B cell (primary cell): ENCODE measurements at regions of chr17 and their contacts with region 1.

Region 1: GRCh38 chr17:1724506-1725362 is at the start of gene WDR81:
- DNase-seq: peak; percentile 92
- ATAC-seq: peak; percentile 64
- H3K4me3 ChIP-seq: peak within 1 kb of the TSS in 4 of 5 experiments; percentile 61 to 82 (median 72)
- H3K4me3 Mint-ChIP-seq: peak within 1 kb of the TSS; percentile 83
- H3K27ac ChIP-seq: peak within 1 kb of the TSS; percentile 83 to 87
- H3K27ac Mint-ChIP-seq: peak within 1 kb of the TSS; percentile 92
- H3K4me1 ChIP-seq: peaks cover 27 to 58% of the 10 kb centered on the region in 2 donors
- H3K4me1 Mint-ChIP-seq: peaks cover 51% of the 10 kb centered on the region
- H3K27me3 ChIP-seq: no peaks in the 10 kb centered on the region
- H3K27me3 Mint-ChIP-seq: no peaks in the 10 kb centered on the region
- CTCF ChIP-seq: no peak
- total RNA-seq, gene WDR81: 102 and 105 TPM in 2 replicates

Region 2: DNA sequence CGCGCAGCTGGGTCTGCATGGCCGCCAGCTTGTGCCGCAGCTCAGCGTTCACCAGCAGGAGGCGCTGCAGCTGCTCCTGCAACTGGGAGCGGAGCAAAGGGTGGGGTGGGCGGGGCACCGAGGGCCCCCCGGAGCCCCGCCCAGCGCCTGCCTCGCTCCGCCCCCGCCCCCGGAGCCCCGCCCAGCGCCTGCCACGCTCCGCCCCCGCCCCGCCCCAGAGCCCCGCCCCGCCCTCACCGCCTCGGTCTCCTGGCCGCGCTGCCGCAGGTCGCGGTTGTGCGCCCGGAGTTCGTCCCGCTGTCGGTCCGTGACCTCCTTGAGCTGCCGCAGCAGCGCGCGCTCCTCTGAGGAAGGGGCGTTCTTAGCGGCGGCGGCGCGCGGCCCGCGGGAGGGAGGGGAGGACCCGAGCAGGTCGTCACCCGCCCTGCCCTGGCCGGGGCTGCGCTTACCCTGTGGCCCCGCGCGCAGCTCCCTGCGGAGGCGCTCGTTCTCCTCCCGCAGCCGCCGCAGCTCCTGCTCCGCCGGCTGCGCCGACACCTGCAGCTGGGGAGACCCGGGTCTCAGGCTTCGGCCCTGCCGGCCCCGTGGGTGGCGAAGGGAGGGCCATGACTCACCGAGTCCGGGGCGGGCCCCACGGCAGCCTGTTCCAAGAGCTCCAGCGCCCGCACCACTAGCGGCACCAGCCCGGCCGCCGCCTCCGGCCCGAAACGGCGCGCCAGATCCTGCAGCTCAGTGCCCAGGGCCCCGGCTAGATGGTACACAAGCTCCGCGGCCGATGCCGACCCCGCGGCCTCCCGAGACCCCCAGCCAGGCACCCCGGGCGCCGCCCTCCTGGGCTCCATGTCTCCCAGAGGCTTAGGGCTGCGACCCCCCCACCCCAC is 75.5 kb before region 1 on chr17:
- CTCF ChIA-PET with region 1: interaction called, 12 read pairs
- POLR2A ChIA-PET with region 1: interaction called, 3 read pairs
- intact Hi-C with region 1: no loop called
- DNase-seq: peak; percentile 96
- ATAC-seq: peak; percentile 72
- H3K4me3 ChIP-seq: peak overlapping the region in 4 of 5 experiments; percentile 35 to 75 (median 60)
- H3K4me3 Mint-ChIP-seq: peak overlapping the region; percentile 79
- H3K27ac ChIP-seq: peak overlapping the region in 1 of 2 donors; percentile 28
- H3K27ac Mint-ChIP-seq: peak overlapping the region; percentile 75
- H3K4me1 ChIP-seq: peaks cover 26 to 36% of the 10 kb centered on the region in 2 donors
- H3K4me1 Mint-ChIP-seq: peaks cover 30% of the 10 kb centered on the region
- H3K27me3 ChIP-seq: no peaks in the 10 kb centered on the region
- H3K27me3 Mint-ChIP-seq: no peaks in the 10 kb centered on the region
- CTCF ChIP-seq: peak; percentile 79

Region 3: DNA sequence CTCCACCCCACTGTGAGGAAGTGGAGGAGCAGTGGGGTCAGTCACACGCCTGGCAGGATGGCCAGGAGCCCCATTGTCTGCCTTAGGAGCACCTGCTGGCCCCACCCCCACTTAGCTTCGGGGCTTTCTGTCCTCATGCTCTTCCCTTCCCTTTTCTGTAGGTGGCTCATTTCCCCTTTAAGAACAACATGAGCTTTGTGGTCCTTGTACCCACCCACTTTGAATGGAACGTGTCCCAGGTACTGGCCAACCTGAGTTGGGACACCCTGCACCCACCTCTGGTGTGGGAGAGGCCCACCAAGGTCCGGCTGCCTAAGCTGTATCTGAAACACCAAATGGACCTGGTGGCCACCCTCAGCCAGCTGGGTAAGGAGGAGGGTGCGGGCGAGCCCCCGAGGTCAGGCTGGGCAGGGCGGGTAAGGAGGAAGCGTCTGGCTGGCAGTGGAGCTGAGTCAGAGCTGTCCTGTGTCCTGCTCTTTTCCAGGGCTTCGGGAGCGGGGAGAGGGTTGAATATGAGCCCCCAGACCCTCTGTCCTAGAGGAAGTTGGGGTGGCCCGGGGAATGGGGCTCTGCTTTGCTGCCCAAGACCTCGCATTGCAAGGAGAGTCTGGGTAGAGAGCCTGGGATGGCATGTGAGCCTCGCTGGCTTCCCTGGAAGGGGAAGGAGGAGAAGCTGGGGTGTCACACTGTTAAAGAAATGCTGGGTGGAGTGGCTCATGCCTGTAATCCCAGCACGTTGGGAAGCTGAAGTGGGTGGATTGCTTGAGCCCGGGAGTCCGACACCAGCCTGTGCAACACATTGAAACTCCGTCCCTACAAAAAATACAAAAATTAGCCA is 27.9 kb after region 1 on chr17:
- CTCF ChIA-PET with region 1: interaction called, 39 read pairs
- POLR2A ChIA-PET with region 1: interaction called, 7 read pairs
- intact Hi-C with region 1: no loop called
- DNase-seq: peak; percentile 75
- ATAC-seq: peak; percentile 82
- H3K4me3 ChIP-seq: peak overlapping the region in 2 of 5 experiments; percentile 17 to 21
- H3K4me3 Mint-ChIP-seq: peak overlapping the region; percentile 67
- H3K27ac ChIP-seq: peak overlapping the region in 1 of 2 donors; percentile 6
- H3K27ac Mint-ChIP-seq: peak overlapping the region; percentile 82
- H3K4me1 ChIP-seq: peaks cover 10 to 15% of the 10 kb centered on the region in 2 donors
- H3K4me1 Mint-ChIP-seq: peaks cover 15% of the 10 kb centered on the region
- H3K27me3 ChIP-seq: no peaks in the 10 kb centered on the region
- H3K27me3 Mint-ChIP-seq: no peaks in the 10 kb centered on the region
- CTCF ChIP-seq: no peak

Region 4: GRCh38 chr17:1769822-1770477 is 45.2 kb after region 1 on chr17:
- CTCF ChIA-PET with region 1: interaction called, 71 read pairs
- POLR2A ChIA-PET with region 1: interaction called, 11 read pairs
- intact Hi-C with region 1: no loop called
- DNase-seq: peak; percentile 62
- ATAC-seq: peak; percentile 54
- H3K4me3 ChIP-seq: no peak overlapping the region
- H3K4me3 Mint-ChIP-seq: peak overlapping the region; percentile 68
- H3K27ac ChIP-seq: peak overlapping the region; percentile 34 to 43
- H3K27ac Mint-ChIP-seq: peak overlapping the region; percentile 90
- H3K4me1 ChIP-seq: peaks cover 26 to 55% of the 10 kb centered on the region in 2 donors
- H3K4me1 Mint-ChIP-seq: peaks cover 36% of the 10 kb centered on the region
- H3K27me3 ChIP-seq: no peaks in the 10 kb centered on the region
- H3K27me3 Mint-ChIP-seq: no peaks in the 10 kb centered on the region
- CTCF ChIP-seq: no peak

Region 5: DNA sequence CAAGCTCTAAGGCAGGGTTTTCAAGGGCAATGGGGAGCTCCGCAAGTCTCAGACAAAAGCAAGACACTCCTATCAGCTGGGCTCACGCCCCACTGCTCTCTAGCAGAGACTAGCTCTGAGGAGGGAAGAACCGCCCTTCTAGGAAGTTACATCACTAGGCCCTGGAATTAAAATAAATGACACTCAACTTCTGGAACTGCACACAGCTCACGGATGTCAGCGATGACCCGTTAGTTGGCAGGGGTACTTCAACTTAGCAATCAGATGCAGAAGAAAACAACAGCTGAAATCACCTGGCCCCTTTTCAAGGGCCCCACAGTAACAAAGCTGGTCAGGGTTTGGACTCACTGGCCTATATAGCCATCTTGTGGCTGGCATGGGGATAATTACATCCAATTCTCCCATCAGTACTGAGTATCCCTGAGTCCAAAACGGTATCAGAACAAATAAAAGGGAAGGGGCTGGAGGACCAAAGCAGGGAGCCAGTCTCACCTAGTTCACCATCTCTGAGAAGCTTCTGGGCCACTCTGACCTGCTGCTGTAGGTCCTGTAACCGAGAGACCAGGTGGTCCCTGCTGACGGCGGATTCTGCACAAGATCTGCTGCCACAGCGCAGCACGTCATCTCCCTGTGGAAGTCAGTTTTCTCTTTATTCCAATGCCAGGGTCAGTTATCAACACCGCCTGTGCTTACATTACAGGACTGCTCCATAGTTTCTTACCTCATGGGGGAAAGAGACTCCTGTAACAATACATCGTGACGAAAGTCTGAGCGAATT is 59.3 kb after region 1 on chr17:
- CTCF ChIA-PET with region 1: interaction called, 397 read pairs
- POLR2A ChIA-PET with region 1: interaction called, 59 read pairs
- intact Hi-C with region 1: no loop called
- DNase-seq: peak; percentile 83
- ATAC-seq: peak; percentile 87
- H3K4me3 ChIP-seq: peak overlapping the region in 2 of 5 experiments; percentile 15 to 22
- H3K4me3 Mint-ChIP-seq: peak overlapping the region; percentile 80
- H3K27ac ChIP-seq: peak overlapping the region; percentile 92 to 97
- H3K27ac Mint-ChIP-seq: peak overlapping the region; percentile 98
- H3K4me1 ChIP-seq: peaks cover 27 to 30% of the 10 kb centered on the region in 2 donors
- H3K4me1 Mint-ChIP-seq: peaks cover 28% of the 10 kb centered on the region
- H3K27me3 ChIP-seq: no peaks in the 10 kb centered on the region
- H3K27me3 Mint-ChIP-seq: no peaks in the 10 kb centered on the region
- CTCF ChIP-seq: peak; percentile 73

Region 6: DNA sequence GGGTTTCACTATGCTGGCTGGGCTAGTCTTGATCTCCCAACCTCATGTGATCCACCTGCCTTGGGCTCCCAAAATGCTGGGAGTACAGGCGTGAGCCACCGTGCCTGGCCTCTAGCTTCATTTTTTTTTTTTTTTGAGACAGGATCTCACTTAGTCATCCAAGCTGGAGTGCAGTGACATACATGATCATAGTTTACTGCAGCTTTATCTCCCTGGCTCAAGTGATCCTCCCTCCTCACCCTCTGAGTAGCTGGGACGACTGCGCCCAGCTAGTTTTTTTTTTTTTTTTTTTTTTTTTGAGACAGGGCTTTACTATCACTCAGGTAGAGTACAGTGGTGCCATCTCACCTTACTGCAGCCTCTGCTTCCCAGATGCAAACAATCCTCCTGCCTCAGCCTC is 114.8 kb after region 1 on chr17:
- CTCF ChIA-PET with region 1: interaction called, 12 read pairs
- POLR2A ChIA-PET with region 1: no interaction called
- intact Hi-C with region 1: no loop called
- DNase-seq: no peak
- ATAC-seq: no peak
- H3K4me3 ChIP-seq: no peak overlapping the region
- H3K4me3 Mint-ChIP-seq: no peak overlapping the region
- H3K27ac ChIP-seq: no peak overlapping the region
- H3K27ac Mint-ChIP-seq: no peak overlapping the region
- H3K4me1 ChIP-seq: peaks cover 0 to 7% of the 10 kb centered on the region in 2 donors
- H3K4me1 Mint-ChIP-seq: peaks cover 13% of the 10 kb centered on the region
- H3K27me3 ChIP-seq: no peaks in the 10 kb centered on the region
- H3K27me3 Mint-ChIP-seq: no peaks in the 10 kb centered on the region
- CTCF ChIP-seq: no peak

Region 7: GRCh38 chr17:2094891-2095535 is 370.3 kb after region 1 on chr17:
- CTCF ChIA-PET with region 1: no interaction called
- POLR2A ChIA-PET with region 1: no interaction called
- intact Hi-C with region 1: no loop called
- DNase-seq: no peak
- ATAC-seq: no peak
- H3K4me3 ChIP-seq: no peak overlapping the region
- H3K4me3 Mint-ChIP-seq: no peak overlapping the region
- H3K27ac ChIP-seq: no peak overlapping the region
- H3K27ac Mint-ChIP-seq: peak overlapping the region; percentile 26
- H3K4me1 ChIP-seq: peaks cover 12 to 13% of the 10 kb centered on the region in 2 donors
- H3K4me1 Mint-ChIP-seq: peaks cover 11% of the 10 kb centered on the region
- H3K27me3 ChIP-seq: no peaks in the 10 kb centered on the region
- H3K27me3 Mint-ChIP-seq: no peaks in the 10 kb centered on the region
- CTCF ChIP-seq: no peak